HepG2 (cell line): ENCODE measurements at regions of chr4 and their contacts with region 1.

Region 1: GRCh38 chr4:100372432-100372831 is 145.4 kb downstream of the EMCN start:
- DNase-seq: peak; percentile 1
- ATAC-seq: peak; percentile 53; the same call in 2 of the 3 replicates
- H3K4me3 ChIP-seq: no peak overlapping the region
- H3K27ac ChIP-seq: no peak overlapping the region
- H3K4me1 ChIP-seq: no peaks in the 10 kb centered on the region
- H3K27me3 ChIP-seq: no peaks in the 10 kb centered on the region
- CTCF ChIP-seq: 0 out of 2 replicates have a peak, but pooled peaks have one; percentile 18
- EP300 ChIP-seq: no peak
- POLR2A ChIP-seq: no peak
- RAD21 ChIP-seq: no peak

Region 2: DNA sequence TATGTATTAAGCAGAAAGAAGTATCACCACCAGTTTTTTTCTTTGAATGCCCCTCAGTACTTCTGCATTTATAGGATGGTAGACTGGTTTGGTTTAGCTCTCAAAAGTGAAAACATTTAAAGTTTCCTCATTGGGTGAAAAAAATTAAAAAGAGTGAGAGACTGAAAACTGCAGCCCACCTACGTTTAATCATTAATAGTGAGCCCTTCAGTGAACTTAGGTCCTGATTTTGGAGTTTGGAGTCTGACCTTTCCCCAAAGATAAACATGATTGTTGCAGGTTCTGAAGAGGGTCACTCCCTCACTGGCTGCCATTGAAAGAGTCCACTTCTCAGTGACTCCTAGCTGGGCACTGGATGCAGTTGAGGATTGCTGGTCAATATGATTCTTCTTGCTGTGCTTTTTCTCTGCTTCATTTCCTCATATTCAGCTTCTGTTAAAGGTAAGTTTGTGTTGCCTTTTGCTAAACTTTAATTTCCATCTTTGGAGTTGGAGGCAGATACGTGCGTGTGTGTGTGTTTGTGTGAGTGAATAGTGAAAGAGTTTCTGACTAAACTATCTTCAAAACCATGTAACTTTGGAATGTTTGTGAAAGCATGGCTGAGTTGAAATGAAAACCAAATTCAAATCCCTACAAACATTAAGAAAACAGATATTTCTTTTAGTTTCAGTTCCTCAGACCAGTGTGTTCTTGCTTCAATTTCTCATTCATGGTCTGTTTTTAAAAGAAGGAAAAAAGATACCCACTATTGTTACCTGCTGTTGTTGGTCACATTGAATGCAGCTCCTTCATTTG is 797.7 kb before region 1 on chr4 and contains the start of gene MTTP:
- CTCF ChIA-PET with region 1: no interaction called
- POLR2A ChIA-PET with region 1: no interaction called
- in situ Hi-C with region 1: no loop called
- intact Hi-C with region 1: no loop called
- DNase-seq: peak; percentile 67
- ATAC-seq: peak; percentile 98
- H3K4me3 ChIP-seq: peak within 1 kb of the TSS; percentile 53 to 96 (median 72)
- H3K27ac ChIP-seq: peak within 1 kb of the TSS; percentile 87
- H3K4me1 ChIP-seq: peaks cover 57% of the 10 kb centered on the region
- H3K27me3 ChIP-seq: no peaks in the 10 kb centered on the region
- CTCF ChIP-seq: no peak
- EP300 ChIP-seq: peak in 1 of 2 experiments; percentile 78; a peak in 2 of 4 replicates
- POLR2A ChIP-seq: peak; percentile 79 to 89
- RAD21 ChIP-seq: no peak
- total RNA-seq, gene MTTP: 58.4 and 102 TPM in 2 replicates

Region 3: DNA sequence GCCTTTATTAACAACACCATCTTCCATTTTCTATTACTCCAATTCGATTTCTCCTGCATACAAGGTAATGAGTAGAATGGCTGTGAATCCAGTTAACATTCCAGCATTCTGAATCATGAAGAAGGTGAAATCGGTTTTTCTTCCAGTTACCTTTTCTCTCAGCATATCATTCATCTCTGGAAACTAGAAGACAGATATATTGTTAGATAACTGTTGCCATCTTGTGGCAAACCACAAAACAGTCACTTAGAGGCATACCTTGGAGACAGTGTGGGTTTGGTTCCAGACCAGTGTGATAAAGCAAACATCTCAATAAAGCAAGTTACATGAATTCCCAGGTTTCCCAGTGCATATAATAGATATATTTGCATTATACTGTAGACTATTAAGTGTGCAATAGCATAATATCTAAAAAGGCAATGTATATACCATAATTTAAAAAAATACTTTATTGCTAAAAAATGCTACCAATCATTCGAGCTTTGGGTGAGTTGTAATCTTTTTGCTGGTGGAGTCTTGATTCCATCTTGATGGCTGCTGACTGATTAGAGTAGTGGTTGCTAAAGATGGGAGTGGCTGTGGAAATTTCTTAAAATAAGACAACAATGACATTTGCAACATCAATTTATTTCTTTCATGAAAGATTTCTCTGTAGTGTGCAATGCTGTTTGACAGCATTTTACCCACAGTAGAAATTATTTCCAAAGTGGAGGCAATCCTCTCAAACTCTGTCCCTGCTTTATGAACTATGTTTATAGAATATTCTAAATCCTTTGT is 1890.8 kb after region 1 on chr4:
- CTCF ChIA-PET with region 1: interaction called, 3 read pairs
- POLR2A ChIA-PET with region 1: no interaction called
- in situ Hi-C with region 1: no loop called
- intact Hi-C with region 1: loop called (anchors 5 kb)
- DNase-seq: peak; percentile 41
- ATAC-seq: peak; percentile 87
- H3K4me3 ChIP-seq: no peak overlapping the region
- H3K27ac ChIP-seq: no peak overlapping the region
- H3K4me1 ChIP-seq: no peaks in the 10 kb centered on the region
- H3K27me3 ChIP-seq: no peaks in the 10 kb centered on the region; a peak in 1 of 5 replicates
- CTCF ChIP-seq: peak; percentile 66
- EP300 ChIP-seq: no peak
- POLR2A ChIP-seq: no peak
- RAD21 ChIP-seq: no peak